Lower leg skin (tissue), 4 donors: ENCODE measurements at regions of chr9 and their contacts with region 1.

Region 1: DNA sequence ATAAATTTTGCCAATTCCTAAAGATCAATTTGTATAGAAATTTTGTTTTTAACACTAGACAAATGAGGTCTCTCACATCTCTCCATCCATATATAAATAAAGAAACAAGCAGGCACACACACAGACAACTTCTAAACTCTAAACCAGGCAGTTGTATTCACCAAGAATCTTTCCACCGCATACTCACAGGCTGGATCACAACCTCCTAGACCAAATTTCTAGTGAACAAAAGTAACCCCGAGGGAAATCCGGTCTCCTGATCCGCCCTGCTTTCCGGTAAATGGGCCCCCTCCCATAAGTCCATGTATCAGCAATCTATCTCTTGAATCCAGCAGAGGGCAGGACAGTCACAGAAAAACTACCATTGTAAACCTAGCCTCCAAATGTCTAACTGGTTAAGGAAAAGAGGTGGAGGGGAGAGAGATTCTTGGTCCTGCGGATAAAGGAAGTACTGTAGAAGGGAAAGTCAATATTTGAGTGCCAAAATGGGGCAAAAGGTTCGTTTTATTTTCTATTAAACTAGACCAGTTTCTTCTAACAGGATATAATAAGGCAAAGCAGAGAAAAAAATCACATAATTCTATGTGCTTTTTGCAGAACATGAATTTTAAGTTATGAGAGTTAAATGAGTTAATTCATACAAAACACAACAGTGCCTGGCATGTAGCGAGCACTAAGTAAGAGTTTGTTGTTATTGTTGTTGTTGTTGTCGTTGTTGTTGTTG is 4.8 kb upstream of the SMU1 start:
- DNase-seq: peak; percentile 79 to 93
- H3K4me3 ChIP-seq: no peak overlapping the region
- CTCF ChIP-seq: peak in 1 of 3 donors; percentile 83
- POLR2A ChIP-seq: no peak

Region 2: DNA sequence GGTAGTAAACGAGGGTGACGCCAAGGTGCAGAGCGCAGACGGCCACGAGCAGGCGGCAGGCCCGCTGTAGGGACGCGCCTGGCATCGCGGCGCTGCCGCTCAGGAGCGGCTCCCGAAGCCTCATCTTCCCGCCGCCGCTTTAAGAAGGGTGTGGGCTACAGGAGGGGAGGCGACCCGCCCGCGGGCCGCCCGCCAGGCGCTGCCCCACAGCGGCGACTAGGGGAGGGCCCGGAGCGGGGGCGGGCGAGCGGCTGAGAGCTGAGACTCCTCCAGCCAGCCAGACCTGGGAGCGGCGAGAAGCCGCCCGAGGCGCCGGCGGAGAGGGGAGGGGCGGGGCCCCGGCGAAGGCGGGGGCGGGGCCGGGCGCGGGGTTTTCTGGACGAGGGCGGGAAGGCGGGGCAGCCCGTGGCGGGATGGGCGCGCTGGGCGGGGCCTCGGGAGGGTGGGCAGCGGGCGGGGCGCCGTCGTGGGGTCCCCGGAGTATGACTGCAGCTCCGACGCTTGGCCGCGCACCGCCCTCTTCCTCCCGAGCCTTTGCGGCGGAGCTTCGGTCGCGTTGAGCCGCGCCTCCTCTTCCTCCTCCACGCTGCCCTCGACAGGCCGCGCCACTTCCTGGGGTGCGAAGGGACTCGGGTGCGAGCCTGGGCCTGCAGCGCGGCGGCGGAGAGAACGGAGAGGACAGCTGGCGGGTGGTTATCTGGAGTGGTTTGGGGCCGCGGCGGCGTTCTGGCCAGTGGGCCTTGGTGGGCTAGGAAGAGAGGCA is 85.9 kb after region 1 on chr9 and contains the start of gene B4GALT1:
- intact Hi-C with region 1: loop called (anchors 5 kb)
- DNase-seq: peak; percentile 93 to 99
- H3K4me3 ChIP-seq: peak within 1 kb of the TSS; percentile 60
- CTCF ChIP-seq: no peak
- POLR2A ChIP-seq: peak in 1 of 2 donors; percentile 62
- total RNA-seq, gene B4GALT1: 40.9 to 59.6 (median 46.3) TPM

Region 3: DNA sequence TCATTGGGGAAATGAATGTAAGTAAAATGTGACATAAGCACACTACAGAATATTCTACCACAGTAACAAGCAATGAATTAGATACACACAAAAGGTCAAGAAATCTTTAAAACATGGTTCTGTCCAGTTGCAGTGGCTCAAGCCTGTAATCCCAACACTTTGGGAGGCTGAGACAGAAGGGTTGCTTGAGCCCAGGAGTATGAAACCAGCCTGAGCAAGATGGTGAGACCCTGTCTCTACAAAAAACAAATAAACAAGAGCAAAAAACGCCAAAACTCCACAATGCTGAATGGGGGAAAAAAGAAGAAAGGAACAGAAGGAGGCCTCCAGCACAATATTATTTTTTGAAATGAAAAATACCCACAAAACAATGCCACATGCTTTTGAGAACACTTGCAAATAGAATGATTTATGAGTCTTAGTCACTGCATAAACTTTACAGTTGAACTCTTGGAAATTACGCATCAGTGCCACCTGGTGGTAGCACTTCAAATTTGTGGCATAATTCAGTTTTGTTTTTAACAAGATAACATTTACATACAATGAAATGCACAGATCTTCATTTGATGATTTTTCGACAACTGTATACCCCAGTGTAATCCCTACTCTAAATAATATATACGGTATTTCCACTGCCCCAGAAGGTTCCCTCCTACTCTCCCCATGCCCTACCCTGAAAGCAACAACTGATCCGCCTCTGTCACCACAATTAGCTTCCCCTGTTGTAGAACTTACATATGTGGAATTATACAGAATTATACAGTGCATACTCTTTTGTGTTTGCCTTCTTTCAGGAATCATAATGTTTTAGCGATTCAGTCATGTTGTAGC is 144.2 kb after region 1 on chr9:
- intact Hi-C with region 1: loop called (anchors 2 kb)
- DNase-seq: peak in 1 of 2 donors; percentile 86
- H3K4me3 ChIP-seq: no peak overlapping the region
- CTCF ChIP-seq: peak in 2 of 3 donors; percentile 30 to 79
- POLR2A ChIP-seq: no peak